ENCODE measurements at regions of chr16 and their contacts with region 1.

Region 1: GRCh38 chr16:81755915-81756614 is 23.0 kb upstream of the PLCG2 start:
- DNase-seq: no peak
- ATAC-seq: no peak
- H3K4me3 ChIP-seq: no peak overlapping the region
- H3K27ac ChIP-seq: no peak overlapping the region
- H3K4me1 ChIP-seq: no peaks in the 10 kb centered on the region
- H3K27me3 ChIP-seq: no peaks in the 10 kb centered on the region
- CTCF ChIP-seq: no peak

Region 2: DNA sequence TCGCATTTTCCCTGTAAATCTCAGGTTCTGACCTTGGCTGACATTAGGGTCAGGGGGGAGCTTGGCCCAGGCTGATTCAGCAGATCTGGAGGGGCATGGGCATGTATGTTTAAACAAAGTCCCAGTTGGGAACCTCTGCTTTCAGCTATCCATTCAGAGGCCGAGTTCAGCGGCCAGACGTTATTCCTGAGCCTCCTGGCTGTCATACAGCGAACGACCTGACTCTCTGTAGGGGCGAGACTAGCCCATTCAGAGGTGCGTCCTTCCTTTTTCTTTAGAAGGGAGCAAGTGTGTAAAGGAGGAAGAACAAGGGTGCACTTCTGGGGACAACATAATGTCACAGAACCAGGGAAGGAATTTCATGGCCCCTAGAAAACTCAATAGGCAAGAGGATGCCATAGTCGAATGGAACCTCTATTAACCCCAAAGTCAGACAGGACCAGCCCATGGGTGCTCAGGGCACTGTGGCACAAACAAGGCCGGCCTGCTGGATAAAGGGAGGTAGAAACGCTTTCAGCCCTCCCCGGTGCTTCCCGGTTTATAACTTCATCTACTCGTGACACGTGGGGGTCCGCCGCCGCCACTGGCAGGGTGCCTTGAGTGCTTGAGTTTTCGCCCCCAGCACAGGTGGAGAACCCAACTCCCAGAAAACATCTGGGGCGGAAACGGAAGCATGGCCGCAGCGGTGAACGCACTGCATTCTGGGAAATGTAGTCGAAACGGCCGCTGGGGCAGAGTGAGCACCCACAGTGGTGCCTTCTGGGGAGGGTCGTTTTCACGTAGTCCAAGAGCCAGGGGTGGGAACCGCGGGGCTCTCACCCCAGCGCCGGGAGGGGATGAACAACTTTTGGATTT is 10.1 kb before region 1 on chr16:
- CTCF ChIA-PET with region 1: interaction called, 13 read pairs
- POLR2A ChIA-PET with region 1: no interaction called
- in situ Hi-C with region 1: no loop called
- intact Hi-C with region 1: no loop called
- DNase-seq: no peak
- ATAC-seq: peak; percentile 89
- H3K4me3 ChIP-seq: peak overlapping the region; percentile 36 to 47
- H3K27ac ChIP-seq: peak overlapping the region; percentile 59; the same call in 1 of the 2 replicates
- H3K4me1 ChIP-seq: no peaks in the 10 kb centered on the region
- H3K27me3 ChIP-seq: no peaks in the 10 kb centered on the region
- CTCF ChIP-seq: no peak